ENCODE measurements at regions of chr17 and their contacts with region 1.

Region 1: DNA sequence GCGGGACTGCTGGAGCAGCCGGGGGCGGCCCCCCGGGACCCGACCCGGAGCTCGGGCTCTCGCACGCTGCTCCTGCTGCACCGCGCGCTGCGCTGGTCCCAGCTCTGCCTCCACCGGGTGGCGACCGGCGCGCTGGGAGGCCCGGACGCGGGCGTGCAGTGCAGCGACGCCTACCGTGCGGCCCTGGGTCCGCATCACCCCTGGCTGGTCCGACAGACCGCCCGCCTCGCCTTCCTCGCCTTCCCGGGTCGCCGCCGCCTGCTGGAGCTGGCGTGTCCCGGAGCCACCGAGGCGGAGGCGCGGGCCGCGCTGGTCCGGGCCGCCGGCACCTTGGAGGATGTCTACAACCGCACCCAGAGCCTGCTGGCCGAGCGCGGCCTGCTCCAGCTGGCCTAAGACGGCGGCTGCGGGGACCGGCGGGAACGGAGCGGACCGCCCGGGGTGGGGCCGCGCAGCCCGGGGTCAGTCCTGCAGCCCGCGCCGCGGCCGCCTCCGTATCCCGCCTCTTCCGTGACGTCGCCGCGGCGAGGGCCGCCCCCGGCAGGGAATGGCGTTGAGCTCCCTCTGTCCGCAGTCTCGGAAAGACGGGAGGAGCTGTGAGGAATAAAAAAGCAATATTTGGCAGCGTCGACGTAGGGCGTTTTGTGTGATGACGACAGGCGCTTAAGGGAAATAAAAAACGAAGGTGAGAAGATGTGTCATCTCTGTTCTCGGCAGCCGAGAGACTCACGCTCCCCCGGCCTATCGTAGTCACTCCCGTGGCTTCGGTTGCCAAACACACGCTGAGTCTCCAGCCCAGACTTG is 1.3 kb downstream of the GLTPD2 start:
- DNase-seq: peak; percentile 90
- ATAC-seq: peak; percentile 95

Region 2: GRCh38 chr17:4739122-4740024 is 50.7 kb before region 1 on chr17 and contains the starts of genes CXCL16 and ZMYND15:
- intact Hi-C with region 1: loop called in 1 of 2 experiments (anchors 5 kb)
- DNase-seq: peak; percentile 68
- ATAC-seq: peak; percentile 76 to 77
- total RNA-seq, gene CXCL16: 6.5 to 8.2 TPM
- total RNA-seq, gene ZMYND15: 0.21 to 0.39 TPM

Region 3: GRCh38 chr17:4833941-4834680 is 44.0 kb after region 1 on chr17:
- intact Hi-C with region 1: no loop called
- DNase-seq: no peak
- ATAC-seq: peak; percentile 4 to 12

Region 4: DNA sequence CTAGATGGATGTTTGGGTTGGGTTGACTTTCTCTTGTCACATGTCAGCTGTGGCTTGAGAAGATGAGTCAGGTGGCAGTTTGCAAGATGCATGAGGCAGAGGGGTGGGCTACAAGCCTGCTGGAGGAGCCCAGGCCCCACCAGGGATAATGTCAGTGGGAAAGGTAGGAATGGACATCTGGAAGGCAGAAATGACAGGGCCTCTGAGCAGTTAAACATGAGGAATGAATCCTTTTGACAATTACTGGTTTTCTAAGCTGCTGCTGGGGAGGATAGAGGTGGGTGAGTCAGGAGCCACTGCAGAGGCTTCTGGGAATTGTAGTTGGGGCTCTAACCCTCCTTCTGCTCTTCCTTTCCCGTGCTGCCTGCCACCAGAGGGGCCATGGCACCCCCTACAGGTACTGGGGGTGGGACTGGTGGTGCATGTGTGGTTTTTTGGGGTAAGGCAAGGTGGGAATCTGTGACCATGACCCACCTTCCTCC is 229.4 kb after region 1 on chr17:
- intact Hi-C with region 1: no loop called
- DNase-seq: no peak
- ATAC-seq: no peak